Adrenal gland (tissue), 19 donors: ENCODE measurements at regions of chr16 and their contacts with region 1.

Region 1: DNA sequence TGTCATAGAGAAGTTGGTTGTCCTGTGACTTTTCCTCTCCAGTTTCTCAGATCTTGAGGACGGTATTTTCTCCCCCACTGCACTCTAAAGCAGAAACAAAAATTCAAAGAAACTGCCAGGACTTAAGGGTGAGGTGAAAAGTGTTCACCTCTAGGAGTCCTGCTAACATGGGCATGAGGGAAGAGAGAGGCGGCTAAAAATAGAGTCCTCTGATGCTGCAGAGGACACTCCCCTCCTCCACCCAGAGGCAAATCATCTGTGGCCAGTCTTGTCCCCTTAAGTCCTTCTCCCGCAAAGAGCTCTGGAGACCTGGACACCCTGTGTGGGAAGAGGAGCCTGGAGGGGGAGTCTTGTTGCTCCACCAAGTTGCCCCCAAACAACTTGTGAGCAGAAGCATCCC is 4.7 kb upstream of the DDX19A start:
- DNase-seq: no peak
- H3K4me3 ChIP-seq: no peak overlapping the region
- H3K27ac ChIP-seq: no peak overlapping the region
- H3K4me1 ChIP-seq: peaks cover 5 to 11% of the 10 kb centered on the region in 2 donors
- H3K27me3 ChIP-seq: no peaks in the 10 kb centered on the region
- CTCF ChIP-seq: no peak
- POLR2A ChIP-seq: no peak

Region 2: GRCh38 chr16:70289229-70290098 is 52.6 kb before region 1 on chr16 and contains the start of gene AARS1:
- intact Hi-C with region 1: loop called in 1 of 2 experiments (anchors 10 kb)
- DNase-seq: peak; percentile 97 to 99 (median 98)
- H3K4me3 ChIP-seq: peak within 1 kb of the TSS; percentile 45 to 83 (median 74)
- H3K27ac ChIP-seq: peak within 1 kb of the TSS; percentile 84 to 98 (median 93)
- H3K4me1 ChIP-seq: peaks cover 9 to 11% of the 10 kb centered on the region in 2 donors
- H3K27me3 ChIP-seq: no peaks in the 10 kb centered on the region
- CTCF ChIP-seq: peak in 1 of 6 experiments; percentile 12
- POLR2A ChIP-seq: peak; percentile 96 to 98
- total RNA-seq, gene AARS1: 76.0 to 120 (median 92.1) TPM